ENCODE measurements at regions of chr17 and their contacts with region 1.

Region 1: GRCh38 chr17:49556223-49556971 is 19.3 kb upstream of the NXPH3 start:
- DNase-seq: peak; percentile 98
- H3K4me3 ChIP-seq: no peak overlapping the region
- H3K27ac ChIP-seq: no peak overlapping the region
- H3K4me1 ChIP-seq: peaks cover 0 to 8% of the 10 kb centered on the region in 2 experiments; a peak in 1 of 4 replicates
- H3K27me3 ChIP-seq: peaks cover 20% of the 10 kb centered on the region; the same call in 1 of the 2 replicates
- CTCF ChIP-seq: peak; percentile 100
- EP300 ChIP-seq: no peak
- RAD21 ChIP-seq: peak; percentile 99

Region 2: GRCh38 chr17:49315551-49316257 is 240.7 kb before region 1 on chr17:
- CTCF ChIA-PET with region 1: interaction called, 54 read pairs
- POLR2A ChIA-PET with region 1: no interaction called
- DNase-seq: peak; percentile 77
- H3K4me3 ChIP-seq: peak overlapping the region in 1 of 2 experiments; percentile 9; a peak in 1 of 4 replicates
- H3K27ac ChIP-seq: peak overlapping the region; percentile 11 to 59; a peak in 3 of 4 replicates
- H3K4me1 ChIP-seq: peaks cover 0 to 8% of the 10 kb centered on the region in 2 experiments
- H3K27me3 ChIP-seq: no peaks in the 10 kb centered on the region
- CTCF ChIP-seq: peak; percentile 100
- EP300 ChIP-seq: peak in 1 of 2 experiments; percentile 32; a peak in 1 of 4 replicates
- RAD21 ChIP-seq: peak; percentile 100

Region 3: DNA sequence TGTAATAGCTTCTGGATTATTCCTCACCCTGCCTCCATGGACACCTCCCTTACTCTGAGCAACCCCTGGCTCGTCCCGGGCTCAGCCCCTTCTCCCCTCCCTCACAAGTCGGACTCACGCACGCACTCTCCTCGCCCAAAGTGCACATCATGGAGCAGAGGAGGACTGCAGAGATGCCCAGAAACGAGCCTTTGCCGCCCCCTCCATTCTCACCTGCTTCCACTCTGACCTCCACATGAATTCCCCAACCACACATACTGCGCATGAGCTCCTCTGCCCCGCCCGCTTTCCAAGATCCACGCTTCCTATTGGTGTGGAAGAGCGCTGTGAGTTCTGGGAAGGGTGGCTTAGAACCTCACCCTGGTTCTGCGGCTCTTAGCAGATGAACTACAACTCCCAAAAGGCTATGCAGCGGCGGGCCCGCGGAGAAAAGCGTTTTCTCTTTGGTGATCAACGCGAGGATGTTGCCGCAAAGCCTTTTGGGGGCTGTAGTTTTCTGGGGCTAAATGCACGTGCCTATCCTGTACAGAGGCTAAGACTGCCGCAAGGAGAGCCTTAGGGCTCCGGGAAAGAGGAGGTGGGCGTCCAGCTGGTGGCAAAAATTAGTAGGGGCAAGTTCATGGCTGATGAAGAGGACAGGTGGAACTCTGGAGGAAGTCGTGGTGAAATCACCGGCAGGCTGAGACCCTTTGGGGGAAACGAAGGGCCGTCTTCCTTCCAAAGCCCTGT is 141.6 kb before region 1 on chr17 and contains the start of gene PHB1:
- CTCF ChIA-PET with region 1: interaction called, 496 read pairs
- POLR2A ChIA-PET with region 1: no interaction called
- DNase-seq: peak; percentile 97
- H3K4me3 ChIP-seq: peak within 1 kb of the TSS; percentile 86 to 87
- H3K27ac ChIP-seq: peak within 1 kb of the TSS in 1 of 2 experiments; percentile 48; a peak in 1 of 4 replicates
- H3K4me1 ChIP-seq: peaks cover 0 to 11% of the 10 kb centered on the region in 2 experiments; a peak in 2 of 4 replicates
- H3K27me3 ChIP-seq: no peaks in the 10 kb centered on the region
- CTCF ChIP-seq: no peak
- EP300 ChIP-seq: no peak
- RAD21 ChIP-seq: no peak
- polyA plus RNA-seq, gene PHB1: 379 and 477 TPM in 2 replicates

Region 4: DNA sequence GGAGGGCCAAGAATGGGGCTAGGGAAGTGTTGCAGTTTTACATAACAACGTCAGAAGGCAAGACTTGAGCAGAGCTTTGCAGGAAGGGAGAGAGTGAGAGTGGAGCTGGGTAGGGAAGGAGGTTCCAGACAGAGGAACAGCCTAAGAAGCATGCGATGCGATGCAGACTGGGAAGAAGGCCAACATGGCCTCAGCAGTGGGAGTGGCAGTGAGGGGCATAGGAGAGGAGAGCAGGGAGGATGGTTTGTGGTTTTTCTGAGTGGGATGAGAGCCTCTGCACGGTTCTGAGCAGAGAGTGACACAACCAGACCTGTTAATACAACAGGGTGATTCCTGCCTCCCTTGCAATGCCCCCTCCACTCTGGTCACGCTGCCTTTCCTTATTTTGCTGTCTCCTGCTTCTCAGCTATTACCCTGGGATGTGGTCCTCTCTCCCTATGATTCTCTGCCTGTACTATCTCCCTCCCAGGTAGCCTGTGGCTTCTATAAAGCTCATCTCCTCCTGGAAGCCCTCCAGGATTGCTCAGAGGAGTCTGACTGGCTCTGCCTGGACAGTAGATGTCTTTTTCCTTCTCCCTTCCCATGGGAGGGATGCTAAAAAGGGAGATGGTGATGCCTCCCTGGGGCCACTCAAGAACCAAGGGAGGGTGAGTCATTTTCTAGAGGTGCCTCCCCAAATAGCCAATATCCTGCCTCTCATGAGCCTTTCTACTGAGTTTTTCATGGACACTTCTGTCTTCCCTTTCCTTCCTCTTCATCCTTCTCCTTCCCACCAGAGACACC is 100.0 kb before region 1 on chr17:
- CTCF ChIA-PET with region 1: interaction called, 55 read pairs
- POLR2A ChIA-PET with region 1: no interaction called
- DNase-seq: no peak
- H3K4me3 ChIP-seq: no peak overlapping the region
- H3K27ac ChIP-seq: peak overlapping the region in 1 of 2 experiments; percentile 30; a peak in 1 of 4 replicates
- H3K4me1 ChIP-seq: peaks cover 18% of the 10 kb centered on the region in 2 experiments; a peak in 3 of 4 replicates
- H3K27me3 ChIP-seq: peaks cover 21% of the 10 kb centered on the region
- CTCF ChIP-seq: no peak
- EP300 ChIP-seq: peak in 1 of 2 experiments; percentile 33; a peak in 1 of 4 replicates
- RAD21 ChIP-seq: peak; percentile 2; the same call in 1 of the 2 replicates

Region 5: GRCh38 chr17:49496183-49496866 is 60.1 kb before region 1 on chr17:
- CTCF ChIA-PET with region 1: interaction called, 499 read pairs
- POLR2A ChIA-PET with region 1: interaction called, 8 read pairs
- DNase-seq: peak; percentile 96
- H3K4me3 ChIP-seq: peak overlapping the region; percentile 54 to 63
- H3K27ac ChIP-seq: no peak overlapping the region; a peak in 1 of 4 replicates
- H3K4me1 ChIP-seq: peaks cover 5 to 42% of the 10 kb centered on the region in 2 experiments; a peak in 2 of 4 replicates
- H3K27me3 ChIP-seq: peaks cover 80% of the 10 kb centered on the region
- CTCF ChIP-seq: peak; percentile 81
- EP300 ChIP-seq: no peak
- RAD21 ChIP-seq: peak; percentile 73

Region 6: DNA sequence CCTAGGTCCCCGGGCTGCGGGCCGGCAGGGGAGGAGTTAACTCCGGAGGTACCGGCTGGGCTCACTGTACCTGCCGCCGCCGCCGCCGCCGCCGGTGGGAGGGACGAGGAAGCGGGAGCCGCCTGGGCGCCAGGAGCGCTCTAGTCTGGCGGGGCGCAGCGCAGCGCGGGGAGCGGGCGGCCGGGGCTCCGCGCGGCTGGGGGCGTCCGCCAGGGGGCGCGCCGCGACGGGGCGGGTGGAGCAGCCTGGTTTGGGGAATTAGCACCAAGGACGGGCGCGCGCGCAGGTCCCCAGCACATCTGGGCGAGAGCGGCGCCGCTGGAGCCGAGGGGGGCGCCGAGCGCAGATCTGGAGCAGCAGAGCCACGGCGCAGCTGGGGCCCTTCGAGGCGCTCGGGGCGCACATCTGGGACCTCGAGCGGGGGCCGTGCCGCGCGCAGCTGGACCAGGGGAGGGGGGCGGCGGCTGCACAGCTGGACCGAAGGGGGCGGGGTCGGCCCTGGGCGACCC is 19.2 kb after region 1 on chr17 and contains the start of gene NXPH3:
- CTCF ChIA-PET with region 1: interaction called, 83 read pairs
- POLR2A ChIA-PET with region 1: no interaction called
- DNase-seq: peak; percentile 91
- H3K4me3 ChIP-seq: peak within 1 kb of the TSS; percentile 67 to 83
- H3K27ac ChIP-seq: no peak within 1 kb of the TSS
- H3K4me1 ChIP-seq: peaks cover 3 to 15% of the 10 kb centered on the region in 2 experiments; a peak in 2 of 4 replicates
- H3K27me3 ChIP-seq: peaks cover 15% of the 10 kb centered on the region; the same call in 1 of the 2 replicates
- CTCF ChIP-seq: peak; percentile 47
- EP300 ChIP-seq: no peak
- RAD21 ChIP-seq: peak; percentile 28; the same call in 1 of the 2 replicates
- polyA plus RNA-seq, gene NXPH3: 0.30 and 0.31 TPM in 2 replicates

Region 7: DNA sequence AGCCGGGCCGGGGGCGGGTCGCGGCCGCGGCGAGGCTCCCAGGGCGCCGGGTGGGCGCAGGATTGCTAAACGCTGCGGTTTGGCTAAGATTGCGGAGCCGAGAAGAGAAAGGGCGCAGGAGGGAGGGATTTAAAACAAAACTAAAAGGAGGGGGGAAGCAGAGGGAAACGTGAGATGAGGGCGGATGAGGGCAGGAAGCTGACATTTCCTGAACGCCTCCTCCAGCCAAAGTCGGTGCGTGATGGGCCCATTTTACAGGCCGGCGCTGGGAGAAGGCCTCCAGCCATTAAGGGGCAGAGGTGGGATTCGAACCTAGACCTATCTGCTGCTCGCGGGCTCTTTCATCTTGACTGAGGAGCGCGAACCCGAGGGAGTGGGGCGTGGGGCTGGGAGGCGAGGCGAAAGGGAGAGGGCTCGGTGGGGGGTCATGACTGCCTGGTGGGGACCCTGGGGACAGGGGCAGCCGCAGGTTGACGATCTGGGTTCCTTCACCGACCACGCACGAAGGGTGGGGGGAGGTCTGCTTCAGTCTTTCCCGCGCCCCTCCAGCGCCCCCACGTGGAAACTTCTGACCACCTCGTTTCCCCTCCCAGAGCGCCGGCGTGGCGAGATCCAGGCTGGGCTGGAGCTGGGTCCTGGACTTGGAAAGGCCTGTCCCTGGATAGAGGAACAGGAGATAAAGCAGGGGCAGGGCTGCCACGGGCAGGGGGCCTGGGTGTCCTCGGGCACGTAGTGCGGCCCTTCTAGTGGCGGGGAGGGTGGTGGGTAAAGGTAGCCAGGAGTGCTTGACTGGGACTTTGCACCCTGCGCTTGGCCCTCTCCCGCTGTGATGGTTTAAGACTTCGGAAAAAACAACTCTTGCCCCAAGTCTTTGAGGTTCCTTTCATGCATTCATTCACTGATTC is 295.2 kb after region 1 on chr17:
- CTCF ChIA-PET with region 1: interaction called, 22 read pairs
- POLR2A ChIA-PET with region 1: no interaction called
- DNase-seq: peak; percentile 92
- H3K4me3 ChIP-seq: peak overlapping the region; percentile 59 to 66
- H3K27ac ChIP-seq: no peak overlapping the region
- H3K4me1 ChIP-seq: peaks cover 4 to 14% of the 10 kb centered on the region in 2 experiments; a peak in 1 of 4 replicates
- H3K27me3 ChIP-seq: peaks cover 10% of the 10 kb centered on the region; the same call in 1 of the 2 replicates
- CTCF ChIP-seq: peak; percentile 90
- EP300 ChIP-seq: no peak
- RAD21 ChIP-seq: peak; percentile 71

Region 8: GRCh38 chr17:49910094-49910857 is 353.9 kb after region 1 on chr17:
- CTCF ChIA-PET with region 1: no interaction called
- POLR2A ChIA-PET with region 1: no interaction called
- DNase-seq: peak; percentile 73
- H3K4me3 ChIP-seq: peak overlapping the region in 1 of 2 experiments; percentile 15; a peak in 1 of 4 replicates
- H3K27ac ChIP-seq: no peak overlapping the region
- H3K4me1 ChIP-seq: peaks cover 0 to 3% of the 10 kb centered on the region in 2 experiments; a peak in 1 of 4 replicates
- H3K27me3 ChIP-seq: peaks cover 93% of the 10 kb centered on the region
- CTCF ChIP-seq: no peak
- EP300 ChIP-seq: no peak
- RAD21 ChIP-seq: no peak